Psoas muscle (tissue), 8 donors: ENCODE measurements at regions of chr7 and their contacts with region 1.

Region 1: GRCh38 chr7:76122516-76123239 is 74.8 kb downstream of the MDH2 start:
- DNase-seq: no peak
- ATAC-seq: no peak
- H3K4me3 ChIP-seq: no peak overlapping the region
- H3K27ac ChIP-seq: no peak overlapping the region
- H3K4me1 ChIP-seq: no peaks in the 10 kb centered on the region
- H3K27me3 ChIP-seq: no peaks in the 10 kb centered on the region
- CTCF ChIP-seq: no peak

Region 2: DNA sequence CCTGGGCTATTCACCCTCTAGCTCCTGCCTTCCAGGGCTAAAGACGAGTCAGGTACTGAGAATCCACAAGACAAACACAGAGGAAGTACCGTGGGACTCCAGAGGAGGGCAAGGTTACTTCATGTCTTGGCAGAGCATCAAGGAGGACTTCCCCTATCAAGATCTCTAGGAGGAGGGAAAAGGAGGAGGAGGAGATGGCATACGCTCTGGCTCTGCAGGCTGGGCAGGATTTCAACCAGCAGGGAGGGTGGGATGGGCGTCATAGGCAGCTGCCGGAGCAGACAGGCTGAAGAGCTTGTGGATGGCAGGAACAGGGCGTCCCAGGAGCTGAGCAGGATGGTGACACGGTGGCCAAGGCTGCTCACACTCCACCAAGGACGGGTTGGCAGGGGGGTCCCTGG is 53.4 kb before region 1 on chr7:
- intact Hi-C with region 1: loop called in 1 of 2 experiments (anchors 10 kb)
- DNase-seq: peak; percentile 63 to 89
- ATAC-seq: peak; percentile 83 to 95 (median 90)
- H3K4me3 ChIP-seq: no peak overlapping the region
- H3K27ac ChIP-seq: peak overlapping the region; percentile 60
- H3K4me1 ChIP-seq: peaks cover 5% of the 10 kb centered on the region
- H3K27me3 ChIP-seq: no peaks in the 10 kb centered on the region
- CTCF ChIP-seq: peak; percentile 31

Region 3: DNA sequence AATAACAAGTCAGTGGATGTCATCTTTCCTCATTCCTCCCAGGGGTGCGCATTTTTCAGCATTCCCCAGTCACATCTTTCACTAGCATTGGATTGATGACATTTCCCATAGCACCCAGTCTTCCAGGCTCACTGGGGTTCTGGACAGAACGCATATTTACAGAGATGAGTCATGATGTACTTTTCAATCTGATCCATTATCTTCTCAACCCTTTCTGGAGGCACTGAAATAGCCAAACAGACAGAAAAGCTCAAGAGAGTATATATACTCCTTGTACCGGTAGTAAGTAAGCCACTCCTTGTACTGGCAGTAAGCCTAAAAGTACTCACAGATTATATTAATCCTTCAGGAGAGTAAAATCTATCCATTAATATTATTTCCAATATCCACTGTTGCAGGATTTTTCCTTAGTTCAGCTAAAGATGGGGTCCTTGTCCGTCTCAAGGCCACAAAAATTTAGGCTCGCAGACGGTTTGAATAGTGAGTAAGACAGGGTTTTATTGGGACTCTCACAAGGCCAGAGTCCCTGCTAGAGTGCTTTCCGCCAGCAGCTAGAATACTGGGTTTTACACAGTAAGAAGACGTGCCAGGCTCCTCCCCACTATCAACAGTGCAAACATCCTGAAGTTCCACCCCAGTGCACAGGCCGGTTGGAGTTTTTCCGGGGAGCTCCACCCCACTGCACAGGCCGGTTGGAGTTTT is 14.0 kb before region 1 on chr7:
- intact Hi-C with region 1: no loop called
- DNase-seq: no peak
- ATAC-seq: peak in 1 of 4 donors; percentile 31
- H3K4me3 ChIP-seq: no peak overlapping the region
- H3K27ac ChIP-seq: no peak overlapping the region
- H3K4me1 ChIP-seq: no peaks in the 10 kb centered on the region
- H3K27me3 ChIP-seq: no peaks in the 10 kb centered on the region
- CTCF ChIP-seq: no peak

Region 4: DNA sequence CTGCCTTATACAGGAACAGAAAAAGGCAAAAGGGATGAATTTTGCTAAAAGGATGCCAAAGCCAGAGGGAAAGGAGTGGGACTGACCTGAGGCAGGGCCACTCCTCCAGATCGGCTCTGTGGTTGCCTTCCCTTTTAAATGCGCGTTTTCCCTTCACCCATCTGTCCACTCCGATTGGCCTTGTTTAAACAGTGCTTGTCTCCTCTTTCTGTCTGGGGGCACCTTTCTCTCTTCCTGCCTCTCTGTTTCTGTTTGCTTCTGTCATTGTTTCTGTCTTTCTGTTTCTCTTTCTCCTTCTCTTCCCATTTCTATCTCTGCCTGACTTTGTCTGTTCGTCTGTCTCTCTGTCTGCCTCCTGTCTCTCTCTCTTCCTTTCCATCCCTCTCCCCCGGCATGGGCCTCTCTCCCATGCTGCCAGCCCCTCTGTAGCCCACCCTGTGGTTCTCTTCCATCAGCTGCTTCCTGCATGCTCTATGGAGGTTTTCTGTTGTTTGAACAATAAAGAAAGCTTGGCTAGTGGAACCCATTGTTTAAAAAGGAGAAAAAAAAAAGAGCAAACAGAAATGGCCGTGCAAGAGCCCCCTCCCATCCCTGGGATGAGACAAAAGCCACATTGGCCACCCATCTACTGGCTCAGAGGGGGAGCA is 150.3 kb after region 1 on chr7:
- intact Hi-C with region 1: no loop called
- DNase-seq: no peak
- ATAC-seq: no peak
- H3K4me3 ChIP-seq: no peak overlapping the region
- H3K27ac ChIP-seq: no peak overlapping the region
- H3K4me1 ChIP-seq: no peaks in the 10 kb centered on the region
- H3K27me3 ChIP-seq: peaks cover 0 to 41% (median 10%) of the 10 kb centered on the region in 3 donors
- CTCF ChIP-seq: no peak